ENCODE measurements at regions of chr1 and their contacts with region 1.

Region 1: DNA sequence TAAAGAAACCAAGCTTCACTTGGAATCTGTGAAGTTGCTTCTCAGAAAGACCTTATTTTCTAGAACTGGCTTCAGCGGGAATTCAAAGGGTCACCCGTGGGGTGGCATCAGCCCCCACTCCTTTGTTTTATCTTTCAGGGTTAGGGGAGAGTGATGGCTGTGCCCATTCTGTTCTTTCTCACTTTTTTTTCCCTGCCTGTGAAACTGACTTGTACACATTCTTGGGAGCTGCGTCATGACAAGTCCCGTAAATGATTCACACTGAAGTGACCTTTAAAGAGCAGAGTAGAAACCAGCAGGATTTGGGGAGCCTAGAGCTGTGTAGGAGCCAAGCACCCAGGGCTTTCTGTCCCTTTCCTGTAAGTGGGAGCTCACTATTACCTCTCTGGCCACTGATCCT is 43.8 kb downstream of the SLC44A3 start:
- DNase-seq: peak; percentile 52 to 55
- H3K4me3 ChIP-seq: no peak overlapping the region
- H3K4me3 Mint-ChIP-seq: peak overlapping the region; percentile 64
- H3K27ac Mint-ChIP-seq: peak overlapping the region; percentile 76
- H3K4me1 ChIP-seq: peaks cover 41% of the 10 kb centered on the region
- H3K4me1 Mint-ChIP-seq: peaks cover 43% of the 10 kb centered on the region
- H3K27me3 ChIP-seq: no peaks in the 10 kb centered on the region
- H3K27me3 Mint-ChIP-seq: no peaks in the 10 kb centered on the region
- CTCF ChIP-seq: no peak

Region 2: DNA sequence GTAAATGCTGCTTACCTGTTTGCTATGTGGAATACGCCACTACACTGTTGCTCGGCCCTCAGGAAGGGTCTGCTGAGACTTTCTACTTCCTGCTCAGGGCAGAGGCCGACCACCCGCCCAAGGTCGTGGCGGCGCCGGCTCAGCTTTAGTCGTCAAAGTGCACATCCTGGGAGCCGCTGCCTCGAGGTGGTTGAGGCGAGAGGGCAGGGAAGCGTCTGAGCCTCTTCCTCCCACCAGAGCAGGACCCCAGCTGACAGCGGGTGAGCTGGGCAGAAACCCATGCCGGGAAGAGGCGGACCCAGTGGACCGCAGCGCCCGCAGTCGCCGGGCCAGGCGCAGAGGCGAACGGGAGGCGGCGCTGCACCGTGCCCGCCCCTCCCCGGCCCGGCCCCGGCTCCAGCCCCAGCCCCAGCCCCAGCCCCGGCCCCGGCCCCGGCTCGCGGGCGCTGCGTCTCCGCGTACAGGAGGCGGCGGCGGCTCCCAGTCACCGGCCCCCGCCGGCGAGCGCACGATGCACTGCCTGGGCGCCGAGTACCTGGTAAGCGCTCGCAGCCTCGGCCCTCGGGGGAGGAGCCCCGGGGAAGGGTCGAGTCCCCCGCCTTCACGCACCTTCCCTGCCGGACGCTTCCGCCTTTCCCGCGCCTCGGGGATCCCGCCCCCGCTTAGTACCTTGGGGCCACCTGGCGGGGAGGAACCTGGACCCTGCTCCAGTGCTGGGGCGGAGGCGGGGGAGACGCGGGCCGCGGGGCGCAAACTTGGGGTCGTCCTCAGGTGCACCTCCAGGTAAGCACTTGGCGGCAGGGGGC is 43.8 kb before region 1 on chr1 and contains the start of gene SLC44A3:
- CTCF ChIA-PET with region 1: no interaction called
- POLR2A ChIA-PET with region 1: no interaction called
- intact Hi-C with region 1: no loop called
- DNase-seq: peak; percentile 70 to 78
- H3K4me3 ChIP-seq: peak within 1 kb of the TSS; percentile 81
- H3K4me3 Mint-ChIP-seq: peak within 1 kb of the TSS; percentile 78
- H3K27ac Mint-ChIP-seq: peak within 1 kb of the TSS; percentile 85
- H3K4me1 ChIP-seq: peaks cover 13% of the 10 kb centered on the region
- H3K4me1 Mint-ChIP-seq: peaks cover 5% of the 10 kb centered on the region
- H3K27me3 ChIP-seq: no peaks in the 10 kb centered on the region
- H3K27me3 Mint-ChIP-seq: no peaks in the 10 kb centered on the region
- CTCF ChIP-seq: no peak
- total RNA-seq, gene SLC44A3: 16.9 and 23.7 TPM in 2 replicates

Region 3: DNA sequence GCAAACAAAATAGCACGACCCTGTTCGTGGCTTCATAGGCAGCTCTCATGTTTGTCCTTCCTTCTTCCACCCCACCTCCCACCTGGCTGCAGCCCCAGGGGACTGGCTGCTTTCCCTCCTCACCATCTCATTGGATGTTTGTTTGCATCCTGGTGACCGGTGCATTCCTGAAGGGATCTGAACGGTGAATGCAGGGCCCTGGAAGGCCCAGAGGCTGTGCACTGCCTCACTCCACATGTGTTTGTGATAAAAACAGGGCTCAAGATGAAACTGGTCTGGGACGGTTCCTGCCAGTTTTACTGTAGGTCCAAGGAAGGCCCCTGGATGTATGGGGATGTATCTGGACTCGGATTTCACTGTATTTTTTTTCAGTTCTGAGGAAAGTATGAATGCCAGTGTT is 20.2 kb after region 1 on chr1:
- CTCF ChIA-PET with region 1: no interaction called
- POLR2A ChIA-PET with region 1: no interaction called
- intact Hi-C with region 1: loop called (anchors 2 kb)
- DNase-seq: peak; percentile 58 to 74
- H3K4me3 ChIP-seq: no peak overlapping the region
- H3K4me3 Mint-ChIP-seq: no peak overlapping the region
- H3K27ac Mint-ChIP-seq: peak overlapping the region; percentile 55
- H3K4me1 ChIP-seq: peaks cover 5% of the 10 kb centered on the region
- H3K4me1 Mint-ChIP-seq: peaks cover 7% of the 10 kb centered on the region
- H3K27me3 ChIP-seq: no peaks in the 10 kb centered on the region
- H3K27me3 Mint-ChIP-seq: no peaks in the 10 kb centered on the region
- CTCF ChIP-seq: no peak

Region 4: DNA sequence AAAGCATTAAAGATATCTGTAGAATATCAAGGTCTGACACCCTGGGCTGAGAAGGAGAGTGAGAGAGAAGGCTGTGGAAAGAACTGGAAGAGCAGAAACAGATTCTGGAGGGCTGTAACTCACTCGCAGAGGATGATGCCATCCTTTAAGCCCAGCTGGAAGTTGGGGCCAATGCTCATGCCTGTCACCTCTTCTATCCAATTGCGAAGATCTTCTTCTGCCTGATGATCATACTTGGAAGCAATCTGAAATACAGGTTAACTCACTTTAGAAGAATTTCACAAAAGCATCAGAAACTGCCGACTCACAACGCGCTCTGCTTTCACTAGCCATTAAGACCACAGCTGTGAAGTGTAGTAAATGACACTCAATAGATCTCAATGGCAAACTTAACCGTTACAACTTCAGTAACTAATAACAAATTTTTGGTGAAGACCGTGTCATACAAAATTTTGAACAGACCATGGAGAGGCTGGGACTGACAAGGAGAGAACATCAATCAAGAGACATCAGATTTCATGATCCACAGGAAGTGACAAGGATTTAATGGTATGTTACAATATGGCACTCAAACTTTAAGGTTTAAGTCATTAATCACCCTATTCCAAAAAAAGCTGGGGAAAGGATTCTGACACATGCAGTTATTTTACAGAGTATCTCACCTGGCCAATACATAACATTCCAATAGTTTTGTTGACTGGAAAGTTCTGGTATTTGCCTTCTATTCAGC is 39.5 kb after region 1 on chr1:
- CTCF ChIA-PET with region 1: no interaction called
- POLR2A ChIA-PET with region 1: no interaction called
- intact Hi-C with region 1: no loop called
- DNase-seq: no peak
- H3K4me3 ChIP-seq: no peak overlapping the region
- H3K4me3 Mint-ChIP-seq: no peak overlapping the region
- H3K27ac Mint-ChIP-seq: no peak overlapping the region
- H3K4me1 ChIP-seq: no peaks in the 10 kb centered on the region
- H3K4me1 Mint-ChIP-seq: peaks cover 15% of the 10 kb centered on the region
- H3K27me3 ChIP-seq: no peaks in the 10 kb centered on the region
- H3K27me3 Mint-ChIP-seq: no peaks in the 10 kb centered on the region
- CTCF ChIP-seq: no peak